Activated T-helper 2 cell treated with anti-CD3 and anti-CD28 coated beads, Interferon-gamma antibody, Interleukin-2, Interleukin-4, amounts not matched to agents 10 μg/mL and 5 μg/mL and 100 μg/mL, durations not matched to agents 14 hours and 24 hours and 36 hours (primary cell): ENCODE measurements at regions of chr5 and their contacts with region 1.

Region 1: GRCh38 chr5:50595199-50595598 is 71.2 kb upstream of the PARP8 start:
- DNase-seq: no peak
- H3K4me3 Mint-ChIP-seq: no peak overlapping the region
- H3K27ac Mint-ChIP-seq: no peak overlapping the region
- H3K4me1 Mint-ChIP-seq: peaks cover 50% of the 10 kb centered on the region
- H3K27me3 Mint-ChIP-seq: no peaks in the 10 kb centered on the region

Region 2: DNA sequence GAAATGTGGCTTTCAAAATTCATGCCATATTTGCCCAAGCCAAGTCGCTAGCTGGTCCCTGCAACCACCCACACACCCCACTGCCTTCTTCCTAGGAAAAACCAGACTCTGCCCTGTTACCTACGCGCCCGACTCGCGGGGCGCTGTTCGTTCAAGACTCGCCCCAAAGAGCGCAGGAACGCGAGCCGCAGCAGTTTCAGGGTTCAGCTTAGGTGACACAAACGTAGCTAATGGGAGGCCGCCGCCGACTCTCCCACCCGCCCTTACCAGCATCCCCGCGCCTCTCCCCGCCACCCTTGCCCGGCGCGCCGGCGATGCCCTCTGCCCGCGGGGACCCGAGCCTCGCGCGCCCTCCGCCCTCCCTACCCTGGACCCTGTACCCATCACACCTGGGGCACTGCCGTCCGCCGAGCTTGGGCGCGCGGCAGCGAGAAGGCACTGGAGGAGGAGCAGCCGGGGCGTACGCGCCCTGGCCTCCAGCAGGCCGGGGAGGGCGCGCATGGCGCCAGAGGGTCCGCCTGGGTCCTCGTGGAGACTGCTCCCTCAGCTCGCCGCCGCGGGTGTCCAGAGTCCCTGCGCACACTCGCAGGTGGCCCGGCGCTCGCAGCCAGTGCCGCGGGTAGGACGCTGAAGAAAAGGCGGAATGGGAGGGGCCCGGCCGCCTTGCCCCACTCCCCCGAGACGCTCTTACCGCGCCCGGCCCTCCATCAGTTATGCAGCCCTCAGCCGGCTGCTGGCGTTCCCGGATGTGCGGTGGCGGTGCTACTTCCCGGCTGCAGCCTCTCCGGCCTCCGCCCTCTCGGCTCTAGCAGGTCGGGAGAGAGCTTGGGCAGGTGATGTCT is 154.3 kb before region 1 on chr5 and contains the start of gene EMB:
- intact Hi-C with region 1: loop called (anchors 2 kb)
- DNase-seq: peak; percentile 76
- H3K4me3 Mint-ChIP-seq: peak within 1 kb of the TSS; percentile 88
- H3K27ac Mint-ChIP-seq: peak within 1 kb of the TSS; percentile 96
- H3K4me1 Mint-ChIP-seq: peaks cover 56% of the 10 kb centered on the region
- H3K27me3 Mint-ChIP-seq: no peaks in the 10 kb centered on the region
- total RNA-seq, gene EMB: 77.6 and 78.6 TPM in 2 replicates

Region 3: DNA sequence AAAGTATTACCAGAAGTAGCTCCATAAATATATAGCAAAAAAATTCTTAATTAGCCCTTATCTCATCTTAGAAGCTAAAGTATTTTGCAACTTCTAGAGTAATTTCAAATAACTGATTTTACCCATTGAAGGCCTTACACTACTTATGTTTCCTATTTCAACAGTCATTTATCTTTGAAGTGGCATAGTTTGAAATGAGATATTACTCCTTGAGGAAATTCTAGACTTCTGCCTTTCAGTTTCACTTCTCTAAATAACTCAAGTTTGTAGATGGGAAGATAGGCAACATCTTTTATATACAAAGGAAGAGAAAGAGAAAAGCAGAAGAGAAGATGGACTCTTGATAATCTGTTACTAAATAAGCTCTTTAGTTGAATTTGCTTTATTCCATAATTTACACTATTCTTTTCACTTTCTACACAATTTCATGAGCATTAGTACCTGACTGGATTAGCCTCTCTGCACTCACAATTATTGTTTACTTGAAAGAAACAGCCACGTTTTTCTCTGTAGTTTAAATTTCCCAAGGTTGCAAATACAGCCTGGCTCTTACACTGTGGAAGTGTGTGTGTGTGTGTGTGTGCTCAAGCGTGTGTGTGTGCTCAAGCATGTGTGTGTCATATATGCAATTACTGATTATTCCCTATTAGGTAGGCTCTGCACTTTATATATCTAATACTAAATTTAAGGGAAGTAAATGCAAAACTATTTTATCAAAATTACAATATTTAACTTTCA is 93.5 kb before region 1 on chr5:
- intact Hi-C with region 1: loop called (anchors 5 kb)
- DNase-seq: no peak
- H3K4me3 Mint-ChIP-seq: no peak overlapping the region
- H3K27ac Mint-ChIP-seq: no peak overlapping the region
- H3K4me1 Mint-ChIP-seq: peaks cover 28% of the 10 kb centered on the region
- H3K27me3 Mint-ChIP-seq: peaks cover 15% of the 10 kb centered on the region

Region 4: GRCh38 chr5:50564079-50564478 is 31.1 kb before region 1 on chr5:
- intact Hi-C with region 1: loop called (anchors 1 kb)
- DNase-seq: peak; percentile 38
- H3K4me3 Mint-ChIP-seq: peak overlapping the region; percentile 45
- H3K27ac Mint-ChIP-seq: peak overlapping the region; percentile 46
- H3K4me1 Mint-ChIP-seq: peaks cover 36% of the 10 kb centered on the region
- H3K27me3 Mint-ChIP-seq: no peaks in the 10 kb centered on the region

Region 5: GRCh38 chr5:50653946-50654345 is 58.7 kb after region 1 on chr5:
- intact Hi-C with region 1: no loop called
- DNase-seq: no peak
- H3K4me3 Mint-ChIP-seq: no peak overlapping the region
- H3K27ac Mint-ChIP-seq: no peak overlapping the region
- H3K4me1 Mint-ChIP-seq: peaks cover 9% of the 10 kb centered on the region
- H3K27me3 Mint-ChIP-seq: no peaks in the 10 kb centered on the region

Region 6: DNA sequence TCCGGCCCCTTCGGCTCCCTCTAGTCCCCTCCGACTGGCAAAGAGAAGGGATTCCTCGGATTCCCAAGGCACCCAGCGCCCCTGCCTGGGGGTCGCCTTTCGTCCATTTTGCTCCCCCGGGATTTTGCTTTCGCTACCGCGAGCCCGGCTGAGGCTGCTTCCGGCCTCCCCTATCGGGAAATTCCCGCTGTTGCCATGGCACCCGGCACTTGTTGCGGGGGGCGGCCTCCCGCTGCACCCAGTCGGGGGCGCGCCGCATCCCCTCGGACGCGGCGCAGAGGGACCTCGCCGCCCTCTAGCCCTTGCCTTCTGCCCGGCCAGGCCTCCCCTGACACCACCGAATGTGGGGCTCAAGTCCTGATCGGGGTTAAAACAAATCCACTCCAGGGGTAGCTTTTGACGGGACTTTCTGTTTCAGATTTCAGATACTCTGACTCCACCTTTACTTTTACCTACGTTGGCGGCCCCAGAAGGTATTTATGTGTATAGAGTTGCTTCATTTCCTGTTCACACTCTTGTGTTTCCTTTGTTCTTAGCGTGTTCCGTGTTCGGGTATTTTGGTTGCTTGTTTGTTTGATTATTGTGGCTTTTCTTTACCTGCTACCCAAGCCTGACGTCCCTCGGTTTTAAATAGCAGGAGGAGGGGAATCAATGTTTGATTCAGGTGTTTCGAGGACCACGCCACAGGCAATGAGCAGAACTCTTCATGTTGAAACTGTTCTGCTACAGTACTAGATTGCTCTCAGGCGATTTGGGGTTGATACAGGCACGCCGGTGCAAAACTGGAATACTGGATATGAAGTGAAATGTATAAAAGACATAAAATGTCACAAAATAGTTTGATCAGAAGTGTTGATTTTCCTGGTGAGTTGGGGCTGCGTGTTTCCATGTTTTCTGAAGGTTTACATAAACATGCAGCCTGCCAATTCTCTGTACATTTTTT is 72.7 kb after region 1 on chr5:
- intact Hi-C with region 1: loop called (anchors 2 kb)
- DNase-seq: peak; percentile 74
- H3K4me3 Mint-ChIP-seq: peak overlapping the region; percentile 98
- H3K27ac Mint-ChIP-seq: peak overlapping the region; percentile 100
- H3K4me1 Mint-ChIP-seq: peaks cover 47% of the 10 kb centered on the region
- H3K27me3 Mint-ChIP-seq: no peaks in the 10 kb centered on the region

Region 7: GRCh38 chr5:50711273-50711672 is 116.1 kb after region 1 on chr5:
- intact Hi-C with region 1: loop called (anchors 1 kb)
- DNase-seq: peak; percentile 65
- H3K4me3 Mint-ChIP-seq: peak overlapping the region; percentile 74
- H3K27ac Mint-ChIP-seq: peak overlapping the region; percentile 91
- H3K4me1 Mint-ChIP-seq: peaks cover 50% of the 10 kb centered on the region
- H3K27me3 Mint-ChIP-seq: no peaks in the 10 kb centered on the region

Region 8: GRCh38 chr5:50744776-50745175 is 149.6 kb after region 1 on chr5:
- intact Hi-C with region 1: loop called (anchors 2 kb)
- DNase-seq: no peak
- H3K4me3 Mint-ChIP-seq: peak overlapping the region; percentile 79
- H3K27ac Mint-ChIP-seq: peak overlapping the region; percentile 83
- H3K4me1 Mint-ChIP-seq: peaks cover 56% of the 10 kb centered on the region
- H3K27me3 Mint-ChIP-seq: no peaks in the 10 kb centered on the region

Region 9: DNA sequence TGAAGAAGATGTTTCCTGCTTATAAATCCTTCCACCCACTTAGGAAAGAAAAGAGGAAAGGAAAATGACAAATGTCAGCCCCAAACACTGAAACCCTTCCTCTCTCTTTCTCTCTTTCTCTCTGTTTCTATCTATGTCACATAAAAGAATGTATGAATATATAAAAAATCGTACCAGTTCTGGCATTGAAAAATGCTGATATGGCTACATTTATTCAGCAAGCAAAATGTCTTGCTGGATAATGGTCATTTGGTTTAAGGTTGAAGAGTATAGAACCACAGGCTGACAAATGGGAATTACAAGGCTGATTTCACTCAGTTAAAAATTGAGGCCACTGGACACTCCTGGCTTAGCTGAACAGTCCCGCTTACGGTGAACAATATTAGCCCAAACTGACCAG is 407.2 kb after region 1 on chr5:
- intact Hi-C with region 1: no loop called
- DNase-seq: no peak
- H3K4me3 Mint-ChIP-seq: no peak overlapping the region
- H3K27ac Mint-ChIP-seq: no peak overlapping the region
- H3K4me1 Mint-ChIP-seq: no peaks in the 10 kb centered on the region
- H3K27me3 Mint-ChIP-seq: no peaks in the 10 kb centered on the region